Sigmoid colon (tissue), 7 donors: ENCODE measurements at regions of chr17 and their contacts with region 1.

Region 1: GRCh38 chr17:21043286-21044232 is 748 bp upstream of the USP22 start:
- DNase-seq: peak; percentile 99
- H3K4me3 ChIP-seq: peak overlapping the region; percentile 61 to 97 (median 76)
- H3K27ac ChIP-seq: peak overlapping the region; percentile 95 to 99 (median 96)
- H3K4me1 ChIP-seq: peaks cover 0 to 38% (median 36%) of the 10 kb centered on the region in 4 donors
- H3K27me3 ChIP-seq: no peaks in the 10 kb centered on the region
- CTCF ChIP-seq: peak; percentile 88 to 91 (median 90)
- EP300 ChIP-seq: peak in 2 of 4 donors; percentile 45 to 54
- POLR2A ChIP-seq: peak in 1 of 2 donors; percentile 63

Region 2: DNA sequence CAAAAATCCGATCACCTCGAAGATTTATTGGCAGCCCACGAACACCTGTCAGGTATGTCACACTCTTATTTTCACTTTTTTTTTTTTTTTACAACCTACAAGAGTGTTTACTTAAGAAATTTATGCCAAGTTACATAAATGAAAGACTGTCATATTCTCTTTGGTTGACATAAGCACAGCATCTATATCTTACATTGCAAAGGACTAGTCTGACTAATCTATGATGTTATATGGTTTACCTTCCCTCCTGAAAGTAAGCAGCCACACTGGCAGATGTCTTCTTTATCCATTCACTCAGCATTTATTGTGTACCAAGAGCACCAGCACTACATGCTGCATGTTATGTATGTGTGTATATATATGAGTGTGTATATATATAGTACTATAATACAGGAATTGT is 307.8 kb before region 1 on chr17:
- intact Hi-C with region 1: no loop called
- DNase-seq: no peak
- H3K4me3 ChIP-seq: no peak overlapping the region
- H3K27ac ChIP-seq: no peak overlapping the region
- H3K4me1 ChIP-seq: no peaks in the 10 kb centered on the region
- H3K27me3 ChIP-seq: peaks cover 0 to 4% (median 0%) of the 10 kb centered on the region in 3 donors
- CTCF ChIP-seq: no peak
- EP300 ChIP-seq: no peak
- POLR2A ChIP-seq: no peak

Region 3: GRCh38 chr17:21001813-21002221 is 41.7 kb before region 1 on chr17:
- intact Hi-C with region 1: loop called (anchors 5 kb)
- DNase-seq: no peak
- H3K4me3 ChIP-seq: peak overlapping the region in 1 of 4 donors; percentile 3
- H3K27ac ChIP-seq: peak overlapping the region; percentile 16 to 71 (median 56)
- H3K4me1 ChIP-seq: peaks cover 0 to 63% (median 54%) of the 10 kb centered on the region in 4 donors
- H3K27me3 ChIP-seq: no peaks in the 10 kb centered on the region
- CTCF ChIP-seq: no peak
- EP300 ChIP-seq: no peak
- POLR2A ChIP-seq: no peak

Region 4: GRCh38 chr17:21025451-21025850 is 18.1 kb before region 1 on chr17:
- intact Hi-C with region 1: loop called (anchors 2 kb)
- DNase-seq: peak; percentile 18
- H3K4me3 ChIP-seq: no peak overlapping the region
- H3K27ac ChIP-seq: peak overlapping the region in 2 of 4 donors; percentile 18 to 79
- H3K4me1 ChIP-seq: peaks cover 0 to 89% (median 71%) of the 10 kb centered on the region in 4 donors
- H3K27me3 ChIP-seq: no peaks in the 10 kb centered on the region
- CTCF ChIP-seq: no peak
- EP300 ChIP-seq: no peak
- POLR2A ChIP-seq: no peak

Region 5: DNA sequence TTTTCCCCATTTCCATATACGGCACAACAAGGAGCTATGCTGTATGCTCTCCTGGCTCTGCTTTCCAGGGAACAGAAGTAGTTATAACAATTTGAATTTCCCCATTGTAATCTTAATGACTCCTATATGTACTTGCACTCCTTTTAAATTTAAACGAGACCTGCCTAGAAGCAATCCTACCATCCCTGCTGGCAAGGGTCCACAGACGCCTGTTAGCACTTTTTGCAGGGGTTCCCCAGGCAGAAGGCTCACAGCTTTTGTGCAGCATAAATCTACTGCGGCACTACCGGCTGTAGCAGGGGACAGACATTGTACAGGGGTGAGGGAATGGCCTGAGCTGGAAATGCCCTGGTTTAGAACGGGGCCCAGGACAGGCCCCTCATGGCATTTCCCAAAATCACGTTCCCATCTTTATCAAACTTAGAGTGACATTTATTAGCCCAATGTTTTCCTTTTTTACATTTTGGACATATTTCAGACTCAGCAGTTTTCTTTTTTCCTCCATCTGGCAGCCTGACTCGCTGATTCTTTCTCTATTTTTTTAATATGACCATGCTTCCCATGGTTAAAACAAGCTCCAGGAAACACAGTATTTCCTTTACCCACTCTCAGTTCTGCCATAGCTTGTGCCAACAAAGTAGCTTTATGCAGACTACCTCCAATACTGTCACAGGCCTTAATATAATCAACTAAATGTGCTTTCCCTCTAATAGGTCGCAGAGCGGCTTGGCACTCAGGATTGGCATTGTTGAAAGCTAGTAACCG is 34.6 kb after region 1 on chr17:
- intact Hi-C with region 1: loop called (anchors 2 kb)
- DNase-seq: no peak
- H3K4me3 ChIP-seq: no peak overlapping the region
- H3K27ac ChIP-seq: peak overlapping the region in 3 of 4 donors; percentile 39 to 85 (median 82)
- H3K4me1 ChIP-seq: peaks cover 0 to 49% (median 39%) of the 10 kb centered on the region in 4 donors
- H3K27me3 ChIP-seq: no peaks in the 10 kb centered on the region
- CTCF ChIP-seq: no peak
- EP300 ChIP-seq: no peak
- POLR2A ChIP-seq: no peak

Region 6: DNA sequence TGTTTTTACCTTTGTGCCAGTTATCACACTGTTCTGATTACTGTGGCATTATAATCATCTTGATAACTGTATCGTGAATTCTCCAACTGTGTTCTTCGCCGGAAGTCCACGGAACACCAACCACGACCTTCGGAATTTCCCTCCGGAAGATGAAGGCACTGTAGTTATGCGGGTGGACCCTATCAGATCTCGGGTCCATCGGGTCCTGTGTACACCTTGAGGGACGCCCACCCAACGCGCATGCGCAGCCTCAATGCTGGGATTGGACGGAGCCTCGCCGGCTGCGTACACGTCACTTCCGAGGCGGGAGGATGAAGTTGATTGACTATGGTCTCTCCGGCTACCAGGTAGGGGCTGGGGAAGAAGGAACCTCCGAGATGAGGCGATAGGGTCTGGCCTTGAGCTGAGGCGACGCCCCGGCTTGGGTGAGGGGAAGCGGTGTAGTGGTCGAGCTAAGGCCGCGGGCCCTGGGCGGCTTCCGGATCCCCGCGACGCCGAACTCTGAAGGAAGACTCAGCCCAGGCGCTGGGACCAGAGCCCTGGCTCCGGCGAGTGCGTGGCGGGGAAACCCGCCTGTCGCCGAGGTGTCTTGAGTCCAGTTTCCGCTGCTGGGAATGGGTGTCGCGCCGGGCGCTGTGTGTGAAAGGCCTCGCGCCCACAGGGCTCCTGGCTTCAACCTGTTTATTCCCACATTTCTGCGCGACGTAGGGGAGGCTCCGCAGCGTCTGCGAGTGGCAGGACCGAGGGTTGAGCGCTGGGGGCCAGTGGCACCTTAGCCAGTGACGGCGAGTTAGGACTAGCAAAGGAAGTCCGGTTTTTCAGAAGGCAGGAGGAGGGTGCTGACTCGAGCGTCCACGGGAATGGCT is 83.3 kb after region 1 on chr17 and contains the start of gene DHRS7B:
- intact Hi-C with region 1: loop called (anchors 5 kb)
- DNase-seq: peak; percentile 98
- H3K4me3 ChIP-seq: peak within 1 kb of the TSS; percentile 66 to 85 (median 76)
- H3K27ac ChIP-seq: peak within 1 kb of the TSS; percentile 91 to 95 (median 94)
- H3K4me1 ChIP-seq: peaks cover 0 to 27% (median 17%) of the 10 kb centered on the region in 4 donors
- H3K27me3 ChIP-seq: no peaks in the 10 kb centered on the region
- CTCF ChIP-seq: no peak
- EP300 ChIP-seq: no peak
- POLR2A ChIP-seq: peak; percentile 31 to 53
- total RNA-seq, gene DHRS7B: 19.7 to 31.9 (median 27.0) TPM

Region 7: DNA sequence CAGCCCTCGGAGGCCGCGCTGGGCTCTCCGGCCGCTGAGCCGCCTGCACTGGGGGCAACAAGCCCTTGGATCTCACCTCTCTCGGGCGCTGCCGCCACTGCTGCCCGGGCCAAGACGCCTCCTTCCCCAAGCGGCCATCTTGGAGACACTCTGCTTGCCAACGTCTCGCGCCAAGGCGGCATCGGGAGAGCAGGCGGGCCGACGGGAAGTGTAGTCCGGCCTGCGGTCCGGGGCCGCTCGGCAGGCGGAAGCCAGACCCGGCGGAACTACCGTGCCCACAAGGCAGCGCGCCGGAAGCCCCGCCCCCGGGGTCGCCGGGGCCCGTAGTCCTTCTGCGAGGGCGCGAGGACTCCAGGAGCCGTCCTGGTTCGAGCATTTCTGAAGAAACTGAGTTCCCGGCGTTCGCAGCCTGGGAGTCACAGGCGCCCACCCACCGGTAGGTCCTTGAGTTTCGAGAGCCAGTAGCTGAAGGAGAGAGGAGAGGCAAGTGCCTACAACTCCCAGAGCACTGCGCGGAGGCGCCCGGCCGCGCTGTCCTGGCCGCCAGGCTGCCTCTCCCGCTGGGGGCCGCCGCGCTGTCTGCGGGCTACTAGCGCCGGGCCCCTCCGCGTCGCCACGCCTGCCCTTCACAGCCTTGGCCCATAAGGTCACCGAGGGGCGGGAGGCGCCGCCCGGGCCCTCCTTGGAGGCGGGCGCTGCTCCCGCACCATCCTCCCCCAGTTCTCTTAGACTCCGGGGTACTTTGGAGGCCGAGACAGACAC is 170.6 kb after region 1 on chr17 and contains the start of gene TMEM11:
- intact Hi-C with region 1: loop called (anchors 10 kb)
- DNase-seq: peak; percentile 98
- H3K4me3 ChIP-seq: peak within 1 kb of the TSS; percentile 85 to 95 (median 91)
- H3K27ac ChIP-seq: peak within 1 kb of the TSS; percentile 89 to 93 (median 92)
- H3K4me1 ChIP-seq: peaks cover 0 to 61% (median 54%) of the 10 kb centered on the region in 4 donors
- H3K27me3 ChIP-seq: no peaks in the 10 kb centered on the region
- CTCF ChIP-seq: no peak
- EP300 ChIP-seq: no peak
- POLR2A ChIP-seq: peak; percentile 51 to 78
- total RNA-seq, gene TMEM11: 14.5 to 32.8 (median 22.4) TPM

Region 8: GRCh38 chr17:21284319-21285163 is 241.0 kb after region 1 on chr17 and contains the start of gene MAP2K3:
- intact Hi-C with region 1: loop called (anchors 2 kb)
- DNase-seq: peak; percentile 100
- H3K4me3 ChIP-seq: peak within 1 kb of the TSS; percentile 77 to 97 (median 86)
- H3K27ac ChIP-seq: peak within 1 kb of the TSS; percentile 91 to 99 (median 98)
- H3K4me1 ChIP-seq: peaks cover 0 to 71% (median 67%) of the 10 kb centered on the region in 4 donors
- H3K27me3 ChIP-seq: no peaks in the 10 kb centered on the region
- CTCF ChIP-seq: no peak
- EP300 ChIP-seq: no peak
- POLR2A ChIP-seq: peak; percentile 31 to 33
- total RNA-seq, gene MAP2K3: 9.5 to 23.3 (median 13.3) TPM